Left cardiac atrium (tissue), 4 donors: ENCODE measurements at regions of chr20 and their contacts with region 1.

Region 1: DNA sequence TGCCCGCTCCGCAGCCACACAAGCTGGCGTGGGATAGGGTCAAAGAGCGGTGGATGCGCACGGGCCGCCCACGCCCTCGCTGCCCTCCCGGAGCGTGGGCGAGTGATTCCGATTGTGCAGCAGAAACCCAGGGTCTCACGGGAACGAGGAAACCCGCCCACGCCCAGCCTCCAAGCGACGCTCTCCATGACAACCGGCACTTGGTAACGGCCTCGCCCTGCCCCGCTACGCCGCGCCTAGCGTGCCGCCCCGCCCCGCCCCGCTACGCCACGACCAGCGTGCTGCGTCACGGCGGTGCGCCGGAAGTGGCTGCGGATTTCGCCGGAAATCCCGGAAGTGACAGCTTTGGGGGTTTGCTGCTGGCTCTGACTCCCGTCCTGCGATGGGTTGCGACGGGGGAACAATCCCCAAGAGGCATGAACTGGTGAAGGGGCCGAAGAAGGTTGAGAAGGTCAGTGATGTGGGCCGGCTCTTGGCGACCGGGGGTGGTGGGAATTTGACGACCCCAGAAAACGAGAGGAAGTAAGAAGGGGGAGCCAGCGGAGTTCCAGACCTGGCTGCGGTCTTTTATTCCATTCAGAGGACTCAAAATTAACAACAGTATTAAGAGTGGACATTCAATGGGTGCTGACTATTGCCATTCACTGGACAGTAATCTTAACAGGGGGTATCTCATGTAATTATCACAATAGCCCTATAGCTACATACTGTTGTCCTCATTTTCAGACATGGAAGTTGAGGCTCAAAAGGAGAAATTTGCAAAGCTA is at the start of gene RTF2:
- DNase-seq: peak; percentile 96
- ATAC-seq: peak; percentile 100
- total RNA-seq, gene RTF2: 68.6 to 73.2 TPM

Region 2: DNA sequence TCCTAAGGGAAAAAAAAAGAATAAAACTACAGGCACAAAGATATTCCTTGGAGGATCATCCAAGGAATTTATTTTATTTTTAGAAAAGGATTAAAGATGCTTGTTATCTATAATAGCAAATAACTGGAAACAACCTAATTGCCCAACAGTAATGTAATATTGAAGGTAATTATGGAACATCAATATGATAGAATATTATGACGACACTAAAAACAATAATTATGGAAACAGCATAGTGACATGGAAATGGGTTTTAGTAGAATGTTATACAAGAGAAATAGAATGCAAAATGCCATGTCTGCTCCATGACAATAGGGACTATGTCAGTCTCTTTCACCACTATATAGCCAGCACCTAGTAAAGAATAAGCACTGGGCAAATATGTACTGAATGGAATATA is 411.4 kb before region 1 on chr20:
- intact Hi-C with region 1: no loop called
- DNase-seq: no peak
- ATAC-seq: no peak

Region 3: GRCh38 chr20:56400090-56400542 is 68.4 kb before region 1 on chr20:
- intact Hi-C with region 1: loop called in 1 of 2 experiments (anchors 5 kb)
- DNase-seq: peak; percentile 49
- ATAC-seq: peak in 1 of 2 donors; percentile 62

Region 4: GRCh38 chr20:56653221-56653620 is 184.7 kb after region 1 on chr20:
- intact Hi-C with region 1: no loop called
- DNase-seq: no peak
- ATAC-seq: no peak

Region 5: DNA sequence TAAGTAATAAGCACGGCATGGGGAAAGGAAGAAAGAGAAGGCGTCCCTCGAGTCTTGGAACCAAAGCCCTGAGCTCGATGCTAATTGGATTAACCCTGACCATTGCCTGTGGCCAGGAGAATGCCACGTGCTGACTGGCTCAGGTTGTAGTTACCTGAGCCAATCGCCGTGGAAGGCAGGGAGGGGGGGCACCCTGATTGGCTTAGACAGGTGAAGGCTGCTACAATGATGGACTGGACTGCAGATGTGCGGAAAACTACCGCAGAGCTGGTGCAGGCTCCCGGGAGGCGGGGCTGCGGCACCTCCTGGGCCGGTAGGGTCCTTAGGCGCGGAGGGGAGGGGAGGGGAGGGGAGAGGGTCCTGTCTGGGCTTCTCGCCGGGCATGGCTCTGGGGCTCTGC is 281.9 kb after region 1 on chr20:
- intact Hi-C with region 1: no loop called
- DNase-seq: no peak
- ATAC-seq: no peak